Naive thymus-derived CD4-positive, alpha-beta T cell (primary cell): ENCODE measurements at regions of chr2 and their contacts with region 1.

Region 1: DNA sequence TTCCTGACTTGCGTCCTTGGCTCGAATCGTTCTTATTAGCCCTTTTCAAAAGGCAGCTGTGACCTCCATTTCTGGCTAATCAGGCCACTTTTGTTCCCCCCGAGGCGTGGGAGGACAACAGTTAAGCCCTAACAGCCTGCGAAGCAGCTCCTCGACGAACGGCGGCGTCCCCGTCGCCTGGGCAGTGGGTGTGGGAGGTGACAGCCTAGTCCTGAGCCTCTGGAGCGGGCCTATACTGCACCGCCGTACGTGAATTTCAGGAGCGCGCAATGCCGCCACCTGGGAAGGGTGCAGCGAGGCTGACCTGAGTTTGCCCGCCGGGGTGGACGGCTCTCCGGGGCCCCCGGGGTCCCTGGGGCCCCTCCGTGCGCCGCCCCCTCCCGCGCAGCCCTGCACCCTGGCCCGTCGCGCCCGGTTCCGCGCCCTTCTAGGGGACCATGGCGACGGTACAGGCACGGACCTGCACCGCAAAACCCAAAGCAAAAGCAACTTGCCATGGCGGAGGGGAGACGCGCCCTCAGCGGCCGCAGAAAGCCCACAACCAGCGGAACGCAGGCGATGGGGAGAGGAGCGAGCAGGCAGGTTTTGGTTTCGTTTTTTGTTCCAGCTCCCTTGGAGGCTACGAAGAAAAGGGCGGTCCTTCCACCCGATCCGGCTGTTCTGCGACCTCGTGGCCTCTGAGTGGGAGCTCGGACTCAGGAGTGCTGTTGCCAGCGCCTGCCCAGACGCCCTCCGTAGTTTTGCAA is at the start of gene RBM43:
- DNase-seq: peak; percentile 56 to 86 (median 80)
- ATAC-seq: peak; percentile 91
- H3K4me3 ChIP-seq: peak within 1 kb of the TSS; percentile 87
- H3K4me3 Mint-ChIP-seq: peak within 1 kb of the TSS; percentile 85 to 98 (median 96)
- H3K27ac ChIP-seq: peak within 1 kb of the TSS; percentile 96
- H3K27ac Mint-ChIP-seq: peak within 1 kb of the TSS; percentile 90 to 99 (median 99)
- H3K4me1 ChIP-seq: no peaks in the 10 kb centered on the region
- H3K4me1 Mint-ChIP-seq: peaks cover 11 to 47% (median 31%) of the 10 kb centered on the region in 7 donors
- H3K27me3 ChIP-seq: no peaks in the 10 kb centered on the region
- H3K27me3 Mint-ChIP-seq: no peaks in the 10 kb centered on the region
- total RNA-seq, gene RBM43: 6.4 to 19.2 (median 15.7) TPM

Region 2: DNA sequence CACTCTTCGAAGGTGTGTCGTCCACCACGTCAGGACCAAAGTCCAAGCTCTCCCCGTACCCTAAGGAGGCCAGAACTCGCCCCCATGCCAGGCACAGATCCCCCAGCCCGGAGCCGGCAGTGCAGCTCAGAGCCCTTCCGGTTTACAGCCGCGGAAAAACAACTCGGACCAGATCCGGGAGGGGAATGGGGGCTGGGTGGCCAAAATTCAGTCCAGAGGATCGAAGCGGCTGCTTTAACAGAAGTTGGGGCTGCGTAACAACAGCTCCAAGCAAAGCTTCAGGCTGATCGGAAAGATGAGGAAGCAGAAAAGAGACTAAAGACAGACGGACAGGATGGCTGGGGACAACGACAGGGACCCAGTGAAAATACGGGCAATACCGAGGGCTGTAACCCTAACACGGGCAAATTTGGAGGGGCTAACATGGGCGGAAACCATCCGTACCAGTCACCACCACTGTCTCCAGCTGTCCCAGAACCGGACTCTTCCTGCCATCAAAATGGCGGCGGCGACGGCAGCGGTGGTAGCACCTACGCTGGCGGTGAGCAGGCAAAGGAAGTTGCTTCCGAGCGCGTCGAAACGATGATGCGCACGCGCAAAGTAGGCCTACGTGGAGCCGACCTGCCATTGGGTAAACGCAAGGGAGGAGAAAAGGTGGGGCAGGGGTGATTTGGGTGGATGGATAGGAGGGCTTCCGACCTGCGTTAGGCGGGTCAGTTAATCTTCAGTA is 1674.0 kb before region 1 on chr2 and contains the start of gene MMADHC:
- CTCF ChIA-PET with region 1: no interaction called
- POLR2A ChIA-PET with region 1: interaction called, 23 read pairs
- intact Hi-C with region 1: loop called (anchors 1 to 10 kb)
- DNase-seq: peak; percentile 83 to 93 (median 91)
- ATAC-seq: peak; percentile 98
- H3K4me3 ChIP-seq: peak within 1 kb of the TSS; percentile 97
- H3K4me3 Mint-ChIP-seq: peak within 1 kb of the TSS; percentile 95 to 99 (median 97)
- H3K27ac ChIP-seq: peak within 1 kb of the TSS; percentile 93
- H3K27ac Mint-ChIP-seq: peak within 1 kb of the TSS; percentile 95 to 100 (median 99)
- H3K4me1 ChIP-seq: peaks cover 23 to 39% of the 10 kb centered on the region in 2 donors
- H3K4me1 Mint-ChIP-seq: peaks cover 27 to 58% (median 50%) of the 10 kb centered on the region in 7 donors
- H3K27me3 ChIP-seq: no peaks in the 10 kb centered on the region
- H3K27me3 Mint-ChIP-seq: peaks cover 22 to 30% (median 30%) of the 10 kb centered on the region in 5 donors
- total RNA-seq, gene MMADHC: 53.3 to 93.4 (median 66.6) TPM

Region 3: DNA sequence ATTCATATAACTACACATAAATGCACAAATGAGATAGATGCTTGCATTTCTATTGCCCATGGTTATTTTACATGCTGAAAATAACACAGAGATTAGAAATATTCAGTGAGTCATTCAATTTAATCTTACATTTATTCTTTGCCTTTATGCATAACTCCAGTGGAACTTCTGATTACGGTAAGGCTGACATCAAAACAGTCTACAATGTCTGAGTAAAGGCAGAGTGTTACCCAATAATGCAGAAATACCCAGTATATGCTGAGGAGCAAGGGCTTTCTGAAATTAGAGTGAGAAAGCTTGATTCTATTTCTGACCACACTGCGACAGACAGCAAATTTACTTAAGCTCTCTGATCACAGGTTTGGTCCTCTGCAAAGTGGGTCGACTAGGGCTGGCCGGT is 18.9 kb after region 1 on chr2:
- CTCF ChIA-PET with region 1: no interaction called
- POLR2A ChIA-PET with region 1: interaction called, 17 read pairs
- intact Hi-C with region 1: no loop called
- DNase-seq: no peak
- ATAC-seq: no peak
- H3K4me3 ChIP-seq: no peak overlapping the region
- H3K4me3 Mint-ChIP-seq: no peak overlapping the region
- H3K27ac ChIP-seq: no peak overlapping the region
- H3K27ac Mint-ChIP-seq: peak overlapping the region in 2 of 9 donors; percentile 14 to 47
- H3K4me1 ChIP-seq: no peaks in the 10 kb centered on the region
- H3K4me1 Mint-ChIP-seq: peaks cover 5 to 26% (median 18%) of the 10 kb centered on the region in 7 donors
- H3K27me3 ChIP-seq: no peaks in the 10 kb centered on the region
- H3K27me3 Mint-ChIP-seq: no peaks in the 10 kb centered on the region

Region 4: DNA sequence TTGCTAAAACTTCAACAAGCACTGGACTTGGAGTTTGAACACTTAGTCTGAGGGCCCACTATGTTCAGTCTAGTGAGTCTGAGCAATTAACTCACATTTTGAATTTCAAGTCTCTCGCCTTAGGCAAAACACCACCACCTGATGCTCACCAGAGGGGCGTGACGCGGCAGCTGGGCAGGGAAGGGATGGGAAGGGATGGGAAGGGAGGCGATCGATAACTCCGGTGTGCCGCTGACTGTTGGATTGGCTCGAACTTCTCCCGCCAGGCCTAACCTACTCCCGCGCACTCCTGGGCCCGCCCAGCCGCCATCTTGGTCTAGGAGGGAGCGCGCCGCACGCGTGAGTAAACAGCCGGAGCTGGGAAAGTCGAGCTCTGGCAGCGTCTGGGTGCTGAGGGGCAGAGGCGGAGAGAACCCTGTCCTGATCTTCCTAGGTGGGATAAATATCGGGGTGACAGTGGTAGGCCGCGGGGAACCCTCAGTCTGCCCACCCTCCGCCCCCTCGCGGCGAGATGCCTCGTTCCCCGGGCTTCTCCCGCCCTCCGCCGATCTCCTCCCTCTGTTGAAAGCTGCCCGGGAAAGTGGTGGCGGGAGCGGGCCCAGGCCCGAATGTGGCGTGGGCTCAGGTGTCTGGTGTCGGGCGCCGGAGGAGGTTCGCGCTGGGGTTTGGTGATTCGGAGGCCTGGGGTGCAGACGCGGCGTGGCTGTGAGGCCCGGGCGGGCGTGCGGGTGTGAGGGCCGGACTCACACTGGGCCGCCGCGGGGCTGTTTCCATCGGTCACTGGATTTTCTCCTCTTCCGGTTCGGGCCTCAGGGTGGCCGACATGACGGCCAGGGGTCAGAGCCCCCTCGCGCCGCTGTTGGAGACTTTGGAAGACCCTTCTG is 148.4 kb after region 1 on chr2 and contains the start of gene RIF1:
- CTCF ChIA-PET with region 1: interaction called, 4 read pairs
- POLR2A ChIA-PET with region 1: interaction called, 8 read pairs
- intact Hi-C with region 1: loop called (anchors 1 kb)
- DNase-seq: peak; percentile 65 to 78 (median 69)
- ATAC-seq: peak; percentile 95
- H3K4me3 ChIP-seq: peak within 1 kb of the TSS; percentile 73
- H3K4me3 Mint-ChIP-seq: peak within 1 kb of the TSS; percentile 91 to 99 (median 96)
- H3K27ac ChIP-seq: peak within 1 kb of the TSS; percentile 89
- H3K27ac Mint-ChIP-seq: peak within 1 kb of the TSS; percentile 88 to 98 (median 95)
- H3K4me1 ChIP-seq: peaks cover 6 to 14% of the 10 kb centered on the region in 2 donors
- H3K4me1 Mint-ChIP-seq: peaks cover 12 to 43% (median 35%) of the 10 kb centered on the region in 7 donors
- H3K27me3 ChIP-seq: no peaks in the 10 kb centered on the region
- H3K27me3 Mint-ChIP-seq: peaks cover 0 to 3% (median 0%) of the 10 kb centered on the region in 5 donors
- total RNA-seq, gene RIF1: 39.8 to 74.0 (median 66.7) TPM

Region 5: DNA sequence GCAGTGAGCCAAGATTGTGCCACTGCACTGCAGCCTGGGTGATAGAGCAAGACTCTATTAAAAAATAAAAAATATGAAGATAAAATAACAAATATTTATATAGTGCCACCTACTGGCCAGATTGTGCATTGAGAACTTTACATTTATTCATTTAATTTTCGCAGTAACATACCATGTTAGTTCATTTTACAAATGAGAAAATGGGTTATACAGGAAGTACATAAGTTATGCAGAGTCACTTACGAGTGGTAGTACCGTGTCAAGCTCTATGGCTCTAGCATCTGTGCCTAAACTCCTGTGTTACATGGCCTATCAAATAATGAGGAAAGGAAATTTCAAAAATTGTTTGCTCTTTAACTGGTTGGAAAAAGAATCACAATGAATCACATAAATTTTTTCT is 176.2 kb after region 1 on chr2:
- CTCF ChIA-PET with region 1: no interaction called
- POLR2A ChIA-PET with region 1: interaction called, 4 read pairs
- intact Hi-C with region 1: loop called (anchors 1 kb)
- DNase-seq: peak in 5 of 9 donors; percentile 24 to 40 (median 32)
- ATAC-seq: peak; percentile 74
- H3K4me3 ChIP-seq: no peak overlapping the region
- H3K4me3 Mint-ChIP-seq: no peak overlapping the region
- H3K27ac ChIP-seq: no peak overlapping the region
- H3K27ac Mint-ChIP-seq: peak overlapping the region in 8 of 9 donors; percentile 30 to 81 (median 60)
- H3K4me1 ChIP-seq: no peaks in the 10 kb centered on the region
- H3K4me1 Mint-ChIP-seq: peaks cover 6 to 14% (median 12%) of the 10 kb centered on the region in 7 donors
- H3K27me3 ChIP-seq: no peaks in the 10 kb centered on the region
- H3K27me3 Mint-ChIP-seq: no peaks in the 10 kb centered on the region

Region 6: DNA sequence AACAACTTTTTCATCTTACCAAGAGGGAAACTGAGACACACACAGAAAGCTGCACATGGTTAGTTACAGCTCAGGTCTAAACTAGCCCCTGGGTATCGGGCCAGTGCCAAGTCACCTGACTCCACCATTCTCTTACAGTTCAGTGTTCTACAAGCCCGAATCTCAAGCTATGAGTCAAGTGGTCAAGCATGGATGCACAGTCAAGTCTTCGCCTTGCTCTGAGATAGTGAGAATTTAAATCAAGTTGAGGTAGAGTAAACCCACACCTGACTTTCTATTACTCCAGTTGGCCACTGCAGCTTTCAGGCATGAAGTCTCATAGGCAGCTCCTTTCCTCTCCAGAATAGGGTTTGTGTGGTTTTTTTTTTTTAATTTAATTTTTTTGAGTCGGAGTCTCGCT is 601.3 kb after region 1 on chr2:
- CTCF ChIA-PET with region 1: no interaction called
- POLR2A ChIA-PET with region 1: no interaction called
- intact Hi-C with region 1: no loop called
- DNase-seq: no peak
- ATAC-seq: no peak
- H3K4me3 ChIP-seq: no peak overlapping the region
- H3K4me3 Mint-ChIP-seq: no peak overlapping the region
- H3K27ac ChIP-seq: no peak overlapping the region
- H3K27ac Mint-ChIP-seq: no peak overlapping the region
- H3K4me1 ChIP-seq: no peaks in the 10 kb centered on the region
- H3K4me1 Mint-ChIP-seq: no peaks in the 10 kb centered on the region
- H3K27me3 ChIP-seq: no peaks in the 10 kb centered on the region
- H3K27me3 Mint-ChIP-seq: peaks cover 0 to 10% (median 7%) of the 10 kb centered on the region in 5 donors

Region 7: GRCh38 chr2:152025678-152026287 is 764.4 kb after region 1 on chr2:
- CTCF ChIA-PET with region 1: no interaction called
- POLR2A ChIA-PET with region 1: no interaction called
- intact Hi-C with region 1: loop called in 1 of 2 experiments (anchors 10 kb)
- DNase-seq: peak; percentile 50 to 81 (median 76)
- ATAC-seq: peak; percentile 94
- H3K4me3 ChIP-seq: peak overlapping the region; percentile 54
- H3K4me3 Mint-ChIP-seq: peak overlapping the region; percentile 3 to 95 (median 82)
- H3K27ac ChIP-seq: no peak overlapping the region
- H3K27ac Mint-ChIP-seq: peak overlapping the region in 4 of 9 donors; percentile 13 to 58 (median 24)
- H3K4me1 ChIP-seq: no peaks in the 10 kb centered on the region
- H3K4me1 Mint-ChIP-seq: peaks cover 0 to 12% (median 10%) of the 10 kb centered on the region in 7 donors
- H3K27me3 ChIP-seq: no peaks in the 10 kb centered on the region
- H3K27me3 Mint-ChIP-seq: peaks cover 0 to 14% (median 0%) of the 10 kb centered on the region in 5 donors